ENCODE measurements at regions of chr10 and their contacts with region 1.

Region 1: GRCh38 chr10:114550756-114551635 is 107.1 kb downstream of the ABLIM1 start:
- H3K4me3 Mint-ChIP-seq: no peak overlapping the region
- H3K27ac Mint-ChIP-seq: no peak overlapping the region
- H3K4me1 Mint-ChIP-seq: no peaks in the 10 kb centered on the region
- H3K27me3 Mint-ChIP-seq: peaks cover 7% of the 10 kb centered on the region

Region 2: GRCh38 chr10:114304017-114304570 is 246.9 kb before region 1 on chr10:
- intact Hi-C with region 1: loop called (anchors 5 kb)
- H3K4me3 Mint-ChIP-seq: peak overlapping the region; percentile 63
- H3K27ac Mint-ChIP-seq: no peak overlapping the region
- H3K4me1 Mint-ChIP-seq: peaks cover 11% of the 10 kb centered on the region
- H3K27me3 Mint-ChIP-seq: peaks cover 9% of the 10 kb centered on the region

Region 3: DNA sequence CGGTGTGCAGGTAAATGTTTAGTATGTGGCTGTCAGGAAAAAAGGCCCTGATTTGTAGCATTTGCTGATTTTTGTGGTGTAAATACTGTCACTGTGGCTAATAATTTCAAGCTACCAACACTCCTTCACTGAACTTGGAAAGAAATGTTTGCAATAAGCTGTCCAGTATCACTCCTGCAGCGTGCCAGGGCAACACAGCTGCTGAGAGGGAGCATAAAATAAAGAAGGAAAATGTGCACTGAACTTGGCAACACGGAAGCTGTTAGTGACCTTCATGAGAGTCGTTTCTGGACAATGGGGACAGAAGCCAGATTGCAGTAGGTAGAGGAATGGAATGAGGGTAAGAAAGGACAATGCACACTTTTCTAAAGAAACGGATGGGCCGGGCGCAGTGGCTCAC is 232.7 kb after region 1 on chr10:
- intact Hi-C with region 1: loop called (anchors 1 kb)
- H3K4me3 Mint-ChIP-seq: no peak overlapping the region
- H3K27ac Mint-ChIP-seq: no peak overlapping the region
- H3K4me1 Mint-ChIP-seq: peaks cover 10% of the 10 kb centered on the region
- H3K27me3 Mint-ChIP-seq: no peaks in the 10 kb centered on the region

Region 4: GRCh38 chr10:114876602-114877300 is 325.8 kb after region 1 on chr10:
- intact Hi-C with region 1: loop called (anchors 2 kb)
- H3K4me3 Mint-ChIP-seq: no peak overlapping the region
- H3K27ac Mint-ChIP-seq: no peak overlapping the region
- H3K4me1 Mint-ChIP-seq: peaks cover 46% of the 10 kb centered on the region
- H3K27me3 Mint-ChIP-seq: peaks cover 13% of the 10 kb centered on the region

Region 5: DNA sequence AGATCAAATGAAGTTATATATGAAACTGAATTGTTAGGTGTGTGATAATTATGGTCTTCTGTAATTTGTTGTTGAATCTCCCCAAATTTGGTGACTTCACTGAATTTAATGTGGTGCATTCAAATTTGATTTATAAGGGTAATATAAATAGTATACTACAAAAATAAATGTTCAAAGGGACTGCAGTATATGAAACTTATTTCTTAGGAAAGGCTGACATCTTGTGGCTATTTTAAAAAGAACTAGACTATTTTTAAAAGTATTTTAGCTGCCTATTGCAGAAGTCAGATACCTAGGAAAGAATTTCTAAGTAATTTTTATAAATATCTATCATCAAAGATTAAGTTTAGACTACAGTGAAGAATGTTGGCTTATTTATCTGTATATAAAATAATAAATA is 578.8 kb after region 1 on chr10:
- intact Hi-C with region 1: loop called (anchors 2 kb)
- H3K4me3 Mint-ChIP-seq: no peak overlapping the region
- H3K27ac Mint-ChIP-seq: no peak overlapping the region
- H3K4me1 Mint-ChIP-seq: no peaks in the 10 kb centered on the region
- H3K27me3 Mint-ChIP-seq: no peaks in the 10 kb centered on the region

Measured in dendritic cell treated with granulocyte-macrophage colony-stimulating factor and Interleukin-4, amounts not matched to agents 40 ng/mL and 50 ng/mL, for 4 days (primary cell).